Mammary epithelial cell (primary cell): ENCODE measurements at regions of chrX and their contacts with region 1.

Region 1: DNA sequence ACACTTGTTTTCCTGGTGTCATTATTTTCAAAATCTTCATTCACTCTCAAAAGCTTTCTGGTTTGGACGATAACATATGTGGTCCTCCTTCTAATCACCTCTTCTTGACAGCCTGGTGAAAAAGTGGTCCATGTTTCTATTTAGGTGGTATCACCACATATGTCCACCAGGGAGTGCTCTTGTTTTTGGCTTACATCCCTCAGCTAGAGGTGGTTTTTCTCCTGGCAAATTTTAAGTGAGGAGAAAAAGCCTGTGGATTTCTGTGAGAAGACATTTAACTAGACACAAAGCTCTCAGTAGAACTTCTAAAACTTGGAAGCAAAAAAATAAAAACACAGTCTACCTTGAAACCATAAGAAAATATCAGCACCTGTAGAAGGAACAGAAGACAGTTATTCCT is 58.0 kb upstream of the FRMPD4 start:
- DNase-seq: peak; percentile 46
- H3K4me3 ChIP-seq: no peak overlapping the region
- H3K27ac ChIP-seq: no peak overlapping the region
- H3K4me1 ChIP-seq: no peaks in the 10 kb centered on the region
- H3K27me3 ChIP-seq: no peaks in the 10 kb centered on the region
- CTCF ChIP-seq: peak; percentile 42 to 72

Region 2: DNA sequence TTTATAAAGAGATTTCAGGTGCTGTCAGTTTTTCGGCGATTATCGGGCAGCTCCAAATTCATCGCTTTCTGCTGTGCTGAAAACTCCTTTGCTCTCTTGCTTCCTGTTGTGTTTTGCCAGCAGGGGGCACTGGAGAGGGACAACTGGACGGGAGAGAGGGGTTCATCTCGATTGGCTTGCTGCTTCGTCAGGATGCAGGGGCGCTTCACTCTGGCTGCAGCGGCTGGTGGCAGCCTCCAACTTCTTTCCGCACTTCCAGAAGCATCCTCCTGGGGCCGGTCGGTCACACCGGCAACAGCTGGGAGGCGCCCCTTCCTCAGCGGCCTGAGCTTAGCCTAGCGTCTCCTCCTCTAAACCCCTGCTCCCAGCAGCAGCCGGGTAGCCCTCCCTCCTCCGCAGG is 292.7 kb before region 1 on chrX:
- CTCF ChIA-PET with region 1: no interaction called
- dilution Hi-C with region 1: no loop called
- in situ Hi-C with region 1: no loop called
- intact Hi-C with region 1: loop called (anchors 10 kb)
- DNase-seq: no peak
- H3K4me3 ChIP-seq: no peak overlapping the region
- H3K27ac ChIP-seq: no peak overlapping the region
- H3K4me1 ChIP-seq: no peaks in the 10 kb centered on the region
- H3K27me3 ChIP-seq: no peaks in the 10 kb centered on the region
- CTCF ChIP-seq: peak; percentile 24 to 42

Region 3: DNA sequence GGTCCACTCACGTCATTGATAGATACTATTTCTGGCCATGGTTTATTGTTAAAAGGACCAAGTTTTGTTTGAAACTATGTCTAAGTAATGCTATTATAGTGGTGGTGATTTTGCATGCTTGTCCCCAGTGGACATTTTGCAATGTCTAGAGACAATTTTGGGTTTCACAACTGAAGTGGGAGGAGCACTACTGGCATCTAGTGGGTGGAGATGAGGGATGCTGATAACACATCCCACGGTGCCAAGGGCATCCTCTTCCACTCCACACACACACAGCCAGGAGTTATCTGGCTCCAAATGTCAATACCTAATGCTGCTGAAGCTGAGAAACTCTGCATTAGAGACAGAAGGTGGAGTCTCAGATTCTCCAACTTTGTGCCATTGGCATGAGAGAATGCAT is 189.2 kb after region 1 on chrX:
- CTCF ChIA-PET with region 1: no interaction called
- dilution Hi-C with region 1: no loop called
- in situ Hi-C with region 1: no loop called
- intact Hi-C with region 1: loop called (anchors 1 kb)
- DNase-seq: no peak
- H3K4me3 ChIP-seq: no peak overlapping the region
- H3K27ac ChIP-seq: no peak overlapping the region
- H3K4me1 ChIP-seq: no peaks in the 10 kb centered on the region
- H3K27me3 ChIP-seq: no peaks in the 10 kb centered on the region
- CTCF ChIP-seq: peak; percentile 12 to 43

Region 4: GRCh38 chrX:12447448-12448064 is 367.3 kb after region 1 on chrX:
- CTCF ChIA-PET with region 1: no interaction called
- dilution Hi-C with region 1: no loop called
- in situ Hi-C with region 1: no loop called
- intact Hi-C with region 1: loop called (anchors 1 kb)
- DNase-seq: peak; percentile 91
- H3K4me3 ChIP-seq: no peak overlapping the region
- H3K27ac ChIP-seq: peak overlapping the region; percentile 84
- H3K4me1 ChIP-seq: peaks cover 17% of the 10 kb centered on the region
- H3K27me3 ChIP-seq: no peaks in the 10 kb centered on the region
- CTCF ChIP-seq: peak; percentile 9 to 46

Region 5: DNA sequence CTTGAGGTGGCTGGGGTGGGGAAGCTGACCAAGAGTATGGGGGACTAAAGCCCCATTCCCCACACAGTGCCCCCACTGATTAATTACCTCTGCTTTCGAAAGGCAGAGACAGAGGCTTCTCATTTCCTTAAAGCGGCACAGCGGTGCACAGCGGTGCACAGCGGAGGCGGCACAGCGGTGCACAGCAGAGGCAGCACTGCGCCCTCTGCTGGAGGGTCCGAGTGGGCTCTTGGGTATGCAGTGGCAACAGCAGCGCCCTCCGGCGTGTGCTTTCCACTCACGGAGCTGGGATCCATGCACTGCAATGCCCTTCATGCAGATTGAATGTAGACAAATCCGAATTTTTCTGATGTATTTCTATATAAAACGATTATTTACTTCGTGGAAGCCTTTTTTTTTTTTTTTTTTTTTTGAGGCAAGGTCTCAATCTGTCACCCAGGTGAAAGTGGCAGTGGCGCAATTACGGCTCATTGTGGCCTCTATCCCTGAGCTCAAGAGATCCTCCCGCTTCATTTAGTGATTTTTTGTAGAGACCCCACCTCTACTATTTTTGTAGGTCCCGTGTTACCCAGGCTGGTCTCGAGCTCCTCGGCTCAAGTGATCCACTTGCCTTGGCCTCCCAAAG is 691.3 kb after region 1 on chrX:
- CTCF ChIA-PET with region 1: interaction called, 5 read pairs
- dilution Hi-C with region 1: no loop called
- in situ Hi-C with region 1: no loop called
- intact Hi-C with region 1: loop called (anchors 2 kb)
- DNase-seq: no peak
- H3K4me3 ChIP-seq: no peak overlapping the region
- H3K27ac ChIP-seq: no peak overlapping the region
- H3K4me1 ChIP-seq: no peaks in the 10 kb centered on the region
- H3K27me3 ChIP-seq: peaks cover 2% of the 10 kb centered on the region
- CTCF ChIP-seq: peak; percentile 44 to 54